Stomach (tissue), 19 donors: ENCODE measurements at regions of chr9 and their contacts with region 1.

Region 1: GRCh38 chr9:113591001-113591898 is 127.7 kb downstream of the RGS3 start:
- DNase-seq: peak; percentile 88 to 93
- H3K4me3 ChIP-seq: no peak overlapping the region
- H3K27ac ChIP-seq: peak overlapping the region in 4 of 5 donors; percentile 24 to 57 (median 40)
- H3K4me1 ChIP-seq: peaks cover 45 to 93% (median 80%) of the 10 kb centered on the region in 4 donors
- H3K27me3 ChIP-seq: no peaks in the 10 kb centered on the region
- CTCF ChIP-seq: peak in 6 of 7 experiments; percentile 6 to 92 (median 88)
- EP300 ChIP-seq: no peak
- POLR2A ChIP-seq: no peak

Region 2: DNA sequence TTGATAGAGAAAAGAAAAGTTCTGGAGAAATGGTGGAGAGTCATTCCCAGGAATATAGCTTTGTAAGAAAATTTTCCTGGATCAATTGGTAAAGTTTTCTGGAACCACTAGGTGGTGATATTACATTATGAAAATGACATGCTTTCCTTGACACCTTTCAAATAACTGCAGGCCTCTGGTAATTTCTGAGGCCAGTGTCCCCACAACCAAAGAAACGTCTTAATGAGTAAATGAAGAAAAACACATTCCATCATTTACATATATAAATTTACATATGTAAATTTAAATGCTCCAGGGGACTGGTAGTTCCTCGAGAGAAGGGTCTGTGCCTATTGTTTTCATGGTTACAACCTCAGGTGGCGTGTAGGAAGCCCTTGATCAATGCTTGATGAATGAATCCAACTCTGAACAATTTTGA is 144.9 kb before region 1 on chr9:
- intact Hi-C with region 1: loop called (anchors 5 kb)
- DNase-seq: peak in 1 of 2 donors; percentile 76
- H3K4me3 ChIP-seq: no peak overlapping the region
- H3K27ac ChIP-seq: peak overlapping the region in 1 of 5 donors; percentile 46
- H3K4me1 ChIP-seq: peaks cover 0 to 14% (median 3%) of the 10 kb centered on the region in 4 donors
- H3K27me3 ChIP-seq: no peaks in the 10 kb centered on the region
- CTCF ChIP-seq: peak in 5 of 7 experiments; percentile 30 to 76 (median 52)
- EP300 ChIP-seq: no peak
- POLR2A ChIP-seq: no peak